ENCODE measurements at regions of chr1 and their contacts with region 1.

Region 1: DNA sequence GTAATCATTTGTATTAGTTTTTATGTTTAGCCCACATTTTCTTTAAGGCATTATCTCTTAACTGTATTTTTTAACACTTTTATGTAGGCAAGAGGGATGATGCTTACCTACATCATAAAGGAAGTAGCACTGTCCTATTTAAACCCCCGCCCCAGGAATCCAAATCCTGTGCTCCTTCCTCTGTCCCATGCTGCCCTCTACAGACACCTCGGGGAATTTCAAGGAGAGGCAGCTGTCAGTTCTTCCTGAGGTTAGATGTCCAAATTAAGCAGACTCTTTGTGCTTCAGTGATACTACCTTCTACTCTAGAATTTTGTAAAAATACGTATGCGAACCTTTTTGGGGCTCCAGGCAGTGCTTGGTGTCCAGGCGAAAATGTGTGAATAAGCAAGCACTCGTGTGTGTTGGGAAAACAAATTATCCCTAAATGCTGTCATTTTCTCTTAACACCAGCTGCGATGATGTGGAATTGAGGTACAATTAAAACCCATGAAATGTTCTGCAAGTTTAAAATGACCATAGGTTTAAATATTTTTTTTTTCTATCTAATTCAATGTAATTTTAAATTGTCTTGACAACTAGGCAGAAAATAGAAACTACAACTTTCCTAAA is 19.2 kb downstream of the CRCT1 start:
- DNase-seq: peak; percentile 45
- H3K4me3 ChIP-seq: no peak overlapping the region
- H3K27ac ChIP-seq: no peak overlapping the region
- H3K4me1 ChIP-seq: no peaks in the 10 kb centered on the region
- H3K27me3 ChIP-seq: peaks cover 31% of the 10 kb centered on the region; the same call in 1 of the 2 replicates
- CTCF ChIP-seq: peak; percentile 79
- EP300 ChIP-seq: no peak
- RAD21 ChIP-seq: peak; percentile 58

Region 2: GRCh38 chr1:152495066-152495675 is 38.3 kb before region 1 on chr1:
- CTCF ChIA-PET with region 1: interaction called, 15 read pairs
- POLR2A ChIA-PET with region 1: no interaction called
- DNase-seq: peak; percentile 47
- H3K4me3 ChIP-seq: no peak overlapping the region
- H3K27ac ChIP-seq: no peak overlapping the region
- H3K4me1 ChIP-seq: no peaks in the 10 kb centered on the region
- H3K27me3 ChIP-seq: peaks cover 13% of the 10 kb centered on the region; the same call in 1 of the 2 replicates
- CTCF ChIP-seq: peak; percentile 80
- EP300 ChIP-seq: no peak
- RAD21 ChIP-seq: 0 out of 2 replicates have a peak, but pooled peaks have one; percentile 40

Region 3: DNA sequence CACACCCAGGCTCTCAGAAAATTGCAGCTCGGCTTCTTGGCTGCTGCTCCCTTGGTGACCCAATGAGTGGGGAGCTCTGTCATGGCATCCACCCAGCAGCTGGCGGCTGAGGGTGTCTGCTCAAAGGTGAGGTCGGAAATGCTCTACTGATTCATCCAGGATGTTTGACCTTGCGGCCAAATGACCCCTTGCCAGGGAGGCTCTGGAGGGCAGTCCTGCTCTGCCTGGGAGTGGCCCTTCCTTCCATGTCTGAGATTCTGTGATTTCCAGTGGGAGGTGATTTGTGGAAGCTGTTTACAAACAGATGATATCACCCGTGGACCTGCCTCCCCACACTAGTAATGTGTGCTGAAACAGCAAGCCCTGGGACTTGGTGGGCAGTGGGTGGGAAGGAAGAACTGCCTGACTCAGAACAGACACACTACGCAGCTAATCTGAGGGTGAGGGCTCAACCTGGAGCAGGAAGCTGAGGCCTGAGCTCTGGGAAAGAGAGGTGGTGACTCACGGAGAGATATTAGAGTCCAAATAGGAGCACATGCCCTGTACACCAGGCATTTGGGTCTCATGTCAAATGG is 16.1 kb before region 1 on chr1:
- CTCF ChIA-PET with region 1: interaction called, 13 read pairs
- POLR2A ChIA-PET with region 1: no interaction called
- DNase-seq: no peak
- H3K4me3 ChIP-seq: no peak overlapping the region
- H3K27ac ChIP-seq: no peak overlapping the region
- H3K4me1 ChIP-seq: no peaks in the 10 kb centered on the region
- H3K27me3 ChIP-seq: peaks cover 46% of the 10 kb centered on the region
- CTCF ChIP-seq: no peak
- EP300 ChIP-seq: no peak
- RAD21 ChIP-seq: no peak